ENCODE measurements at regions of chr3 and their contacts with region 1.

Region 1: DNA sequence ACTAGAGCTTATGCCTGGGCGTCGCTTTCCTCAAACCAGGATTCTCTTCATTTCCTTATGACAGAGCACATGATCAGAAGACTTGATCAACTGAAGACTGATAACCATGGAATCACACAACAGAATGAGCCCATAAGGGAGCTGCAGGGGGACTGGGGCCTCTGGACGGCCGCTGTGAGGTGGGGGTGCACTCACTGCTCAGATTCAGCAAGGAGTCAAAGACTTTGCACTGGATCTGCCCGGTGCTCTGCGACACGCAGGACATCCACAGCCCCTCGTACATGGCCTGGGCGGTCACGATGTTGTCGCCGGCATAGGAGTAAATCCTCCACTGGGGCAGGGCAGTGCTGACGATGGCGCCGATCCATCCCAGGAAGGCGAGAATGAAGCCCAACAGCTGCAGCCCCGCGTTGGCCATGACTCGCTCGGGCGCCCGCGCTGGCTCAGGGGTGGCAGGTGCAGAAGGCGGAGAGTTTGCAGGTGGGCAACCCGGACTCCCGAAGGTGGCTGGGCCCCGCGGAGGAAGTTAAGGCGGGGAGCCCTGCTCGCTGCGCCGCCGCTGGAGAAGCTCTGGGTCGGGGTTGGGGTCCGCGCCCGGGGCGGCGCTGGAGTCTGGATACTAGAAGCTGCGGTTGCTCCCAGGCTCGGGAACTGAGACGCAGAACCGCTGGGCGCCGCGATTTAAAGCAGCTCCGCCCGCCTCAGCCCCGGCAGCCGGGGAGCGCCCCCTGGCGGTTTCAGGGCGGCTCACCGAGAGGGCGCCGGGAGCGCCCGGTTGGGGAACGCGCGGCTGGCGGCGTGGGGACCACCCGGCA is at the start of gene CLDN1:
- DNase-seq: peak; percentile 80
- ATAC-seq: peak; percentile 92
- H3K4me3 ChIP-seq: peak within 1 kb of the TSS; percentile 69
- H3K27ac ChIP-seq: no peak within 1 kb of the TSS
- H3K4me1 ChIP-seq: peaks cover 20% of the 10 kb centered on the region
- H3K27me3 ChIP-seq: no peaks in the 10 kb centered on the region
- CTCF ChIP-seq: peak; percentile 92
- total RNA-seq, gene CLDN1: 6.8 and 9.6 TPM in 2 replicates

Region 2: DNA sequence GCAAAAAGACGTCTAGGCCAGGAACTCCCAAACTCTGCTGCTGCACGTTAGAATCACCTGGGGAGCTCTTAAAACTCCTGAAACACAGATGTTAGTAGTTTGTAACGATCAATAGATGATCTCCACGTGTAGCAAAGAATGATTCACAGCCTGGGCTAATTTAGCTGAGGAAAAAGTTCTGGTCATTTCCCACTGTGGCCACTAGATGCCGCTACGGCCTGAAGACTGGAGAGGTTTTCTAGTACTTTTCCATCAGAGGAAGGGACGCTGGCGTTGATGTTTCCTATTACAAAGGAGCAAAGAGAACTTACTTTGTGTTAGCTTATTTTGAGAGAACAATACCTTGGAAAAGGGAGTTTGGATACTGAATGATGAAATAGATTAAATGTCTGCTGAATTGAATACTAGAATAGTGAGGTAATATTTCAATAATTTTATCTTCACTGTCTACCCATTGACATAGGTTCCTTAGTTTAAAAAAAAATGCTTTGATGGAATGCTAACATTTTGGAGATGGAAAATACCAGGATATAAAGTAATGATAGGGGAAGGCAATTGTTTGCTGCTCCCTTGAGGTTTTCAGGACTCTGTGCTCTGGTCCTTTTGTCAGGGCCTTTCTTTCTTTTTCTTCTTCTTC is 360.4 kb before region 1 on chr3:
- CTCF ChIA-PET with region 1: interaction called, 4 read pairs
- POLR2A ChIA-PET with region 1: no interaction called
- intact Hi-C with region 1: loop called (anchors 1 kb)
- DNase-seq: peak; percentile 95
- ATAC-seq: peak; percentile 82
- H3K4me3 ChIP-seq: no peak overlapping the region
- H3K27ac ChIP-seq: no peak overlapping the region
- H3K4me1 ChIP-seq: peaks cover 4% of the 10 kb centered on the region; the same call in 1 of the 2 replicates
- H3K27me3 ChIP-seq: no peaks in the 10 kb centered on the region
- CTCF ChIP-seq: peak; percentile 95

Region 3: DNA sequence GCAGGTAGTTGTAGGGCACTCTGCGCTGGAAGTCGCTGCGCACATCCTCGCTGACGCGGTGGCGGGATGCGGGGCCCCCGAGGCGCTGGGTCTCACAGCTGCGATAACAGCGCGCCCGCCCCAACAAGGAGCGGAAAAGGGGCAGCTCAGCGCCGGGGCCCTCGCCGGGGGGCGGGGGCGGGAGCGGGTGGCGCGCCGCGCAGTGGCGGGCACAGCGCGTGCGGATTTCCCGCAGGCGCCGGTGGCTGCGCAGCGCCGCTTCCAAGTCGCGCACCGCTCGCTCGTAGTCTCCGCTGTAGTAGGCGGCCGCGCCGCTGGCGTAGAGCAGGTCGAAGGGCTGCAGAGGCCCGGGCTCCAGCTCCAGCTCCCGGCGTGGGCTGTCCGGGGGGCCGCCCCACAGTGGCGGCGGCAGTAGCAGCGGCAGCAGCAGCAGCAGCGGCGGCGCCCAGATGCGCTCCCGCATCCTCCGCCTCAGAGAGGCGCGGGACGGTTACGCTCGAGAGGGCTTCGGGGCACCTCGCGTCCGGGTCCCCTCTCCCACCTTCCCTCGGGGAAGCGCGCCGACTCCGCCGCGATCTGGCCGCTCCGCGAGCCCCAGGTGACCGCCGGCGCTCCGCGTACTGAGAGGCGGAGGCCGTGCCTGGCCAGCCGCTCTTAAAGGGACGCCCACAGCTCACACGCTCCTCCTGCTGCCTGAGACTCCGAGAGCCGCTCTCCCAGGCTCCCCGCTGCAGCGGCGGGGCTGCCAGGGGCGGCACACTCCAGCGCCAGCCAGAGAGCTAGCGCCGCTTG is 201.5 kb before region 1 on chr3 and contains the start of gene P3H2:
- CTCF ChIA-PET with region 1: no interaction called
- POLR2A ChIA-PET with region 1: no interaction called
- intact Hi-C with region 1: loop called (anchors 5 kb)
- DNase-seq: peak; percentile 92
- ATAC-seq: peak; percentile 99
- H3K4me3 ChIP-seq: peak within 1 kb of the TSS; percentile 89
- H3K27ac ChIP-seq: no peak within 1 kb of the TSS
- H3K4me1 ChIP-seq: peaks cover 4% of the 10 kb centered on the region
- H3K27me3 ChIP-seq: no peaks in the 10 kb centered on the region
- CTCF ChIP-seq: peak; percentile 64
- total RNA-seq, gene P3H2: 4.5 and 11.4 TPM in 2 replicates

Region 4: DNA sequence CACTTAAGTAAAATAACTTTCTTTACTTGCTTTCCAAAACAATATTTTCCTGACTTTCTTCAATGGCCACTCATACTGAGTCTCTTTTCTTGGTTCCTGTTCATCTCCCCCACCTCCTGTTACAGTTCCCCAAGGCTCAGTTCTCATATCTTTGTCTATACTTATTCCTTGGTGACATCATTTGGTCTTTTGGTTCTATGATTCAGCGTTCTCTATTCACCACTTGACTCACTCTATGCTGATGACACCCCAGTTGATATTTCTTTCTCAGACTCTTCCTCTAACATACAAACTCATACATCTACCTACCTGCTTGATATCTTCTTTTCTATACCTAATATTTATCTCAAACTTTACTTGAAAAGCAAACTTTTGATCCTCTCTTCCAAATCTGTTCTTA is 116.3 kb before region 1 on chr3:
- CTCF ChIA-PET with region 1: interaction called, 7 read pairs
- POLR2A ChIA-PET with region 1: no interaction called
- intact Hi-C with region 1: loop called (anchors 1 kb)
- DNase-seq: peak; percentile 53
- ATAC-seq: no peak; the same call in 1 of the 2 replicates
- H3K4me3 ChIP-seq: no peak overlapping the region
- H3K27ac ChIP-seq: no peak overlapping the region
- H3K4me1 ChIP-seq: peaks cover 9% of the 10 kb centered on the region; the same call in 1 of the 2 replicates
- H3K27me3 ChIP-seq: no peaks in the 10 kb centered on the region
- CTCF ChIP-seq: no peak

Region 5: GRCh38 chr3:190224863-190225692 is 96.9 kb before region 1 on chr3:
- CTCF ChIA-PET with region 1: interaction called, 32 read pairs
- POLR2A ChIA-PET with region 1: interaction called, 3 read pairs
- intact Hi-C with region 1: loop called (anchors 1 kb)
- DNase-seq: peak; percentile 78
- ATAC-seq: peak; percentile 73
- H3K4me3 ChIP-seq: no peak overlapping the region
- H3K27ac ChIP-seq: no peak overlapping the region
- H3K4me1 ChIP-seq: peaks cover 11% of the 10 kb centered on the region
- H3K27me3 ChIP-seq: no peaks in the 10 kb centered on the region
- CTCF ChIP-seq: peak; percentile 72

Region 6: DNA sequence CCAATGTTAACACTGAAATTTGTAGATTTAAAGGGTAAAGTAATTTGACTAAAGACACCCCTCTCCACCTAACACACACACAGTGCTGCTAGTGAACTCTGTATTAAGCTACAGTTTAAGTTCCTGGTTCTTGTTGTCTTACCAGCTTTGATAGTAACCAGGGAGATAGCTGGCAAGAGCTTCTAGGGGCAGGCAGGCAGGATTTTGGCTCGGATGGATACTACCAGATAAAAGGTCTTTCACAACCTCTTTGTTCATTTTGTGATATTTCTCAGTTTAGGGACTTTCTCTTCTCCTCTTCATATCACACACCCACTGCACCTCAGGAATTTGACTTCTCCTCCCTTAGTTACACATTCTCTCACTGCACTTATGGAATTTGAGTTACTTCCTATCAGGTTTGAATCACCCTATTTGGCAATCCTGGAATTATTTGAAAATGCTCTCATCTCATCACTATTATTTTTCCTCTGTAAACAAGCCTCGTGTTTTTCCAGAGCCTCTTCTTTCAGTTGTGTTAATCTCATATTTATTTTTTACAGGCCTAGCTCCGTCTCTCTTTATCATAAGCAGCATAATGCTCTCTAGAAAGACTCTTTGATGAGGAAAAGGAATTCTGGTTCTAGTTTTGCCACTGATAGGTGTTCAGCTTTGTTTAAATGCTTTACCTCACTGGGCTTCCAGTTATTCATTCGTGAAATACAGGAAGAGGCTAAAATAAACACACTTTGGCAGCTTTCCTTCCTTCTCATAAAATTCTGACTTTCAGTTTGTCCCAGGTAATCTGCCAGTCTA is 23.2 kb after region 1 on chr3:
- CTCF ChIA-PET with region 1: interaction called, 3 read pairs
- POLR2A ChIA-PET with region 1: no interaction called
- intact Hi-C with region 1: loop called (anchors 1 kb)
- DNase-seq: peak; percentile 95
- ATAC-seq: peak; percentile 90
- H3K4me3 ChIP-seq: peak overlapping the region; percentile 65
- H3K27ac ChIP-seq: peak overlapping the region; percentile 94
- H3K4me1 ChIP-seq: peaks cover 28% of the 10 kb centered on the region
- H3K27me3 ChIP-seq: no peaks in the 10 kb centered on the region
- CTCF ChIP-seq: no peak

Region 7: GRCh38 chr3:190424478-190425439 is 102.8 kb after region 1 on chr3:
- CTCF ChIA-PET with region 1: interaction called, 4 read pairs
- POLR2A ChIA-PET with region 1: interaction called, 3 read pairs
- intact Hi-C with region 1: loop called (anchors 2 kb)
- DNase-seq: peak; percentile 78
- ATAC-seq: peak; percentile 82
- H3K4me3 ChIP-seq: no peak overlapping the region
- H3K27ac ChIP-seq: no peak overlapping the region
- H3K4me1 ChIP-seq: no peaks in the 10 kb centered on the region
- H3K27me3 ChIP-seq: no peaks in the 10 kb centered on the region
- CTCF ChIP-seq: peak; percentile 81

Region 8: DNA sequence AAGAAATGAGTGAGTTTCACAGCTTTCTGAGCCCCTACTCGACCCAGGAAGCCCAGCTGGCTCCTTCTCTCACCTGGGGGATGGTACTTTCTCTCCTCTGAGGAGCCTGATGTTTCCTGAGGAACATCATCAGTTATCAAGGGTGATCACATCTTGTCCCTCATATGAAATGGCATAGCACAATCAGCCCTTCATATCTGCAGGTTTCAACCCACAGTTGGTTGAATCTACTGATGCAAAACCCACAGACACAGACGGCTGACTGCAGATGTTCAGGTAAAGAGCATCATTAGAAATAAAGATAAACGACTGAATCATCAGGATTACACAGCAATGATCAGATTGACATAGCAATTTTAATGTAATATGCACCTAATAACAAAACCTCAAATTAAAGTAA is 783.4 kb after region 1 on chr3:
- CTCF ChIA-PET with region 1: no interaction called
- POLR2A ChIA-PET with region 1: no interaction called
- intact Hi-C with region 1: no loop called
- DNase-seq: no peak
- ATAC-seq: no peak
- H3K4me3 ChIP-seq: no peak overlapping the region
- H3K27ac ChIP-seq: no peak overlapping the region
- H3K4me1 ChIP-seq: no peaks in the 10 kb centered on the region
- H3K27me3 ChIP-seq: no peaks in the 10 kb centered on the region
- CTCF ChIP-seq: no peak

Measured in PC-3 (cell line).